Activated CD4-positive, alpha-beta T cell treated with anti-CD3 and anti-CD28 coated beads, Interleukin-2, amount 10 ng/mL, durations not matched to agents 24 days and 14 days (primary cell): ENCODE measurements at regions of chr2 and their contacts with region 1.

Region 1: GRCh38 chr2:113889471-113890252 is at the start of gene ACTR3:
- DNase-seq: peak; percentile 100
- H3K4me3 Mint-ChIP-seq: peak within 1 kb of the TSS; percentile 94
- H3K27ac Mint-ChIP-seq: peak within 1 kb of the TSS; percentile 99
- H3K4me1 Mint-ChIP-seq: peaks cover 66% of the 10 kb centered on the region
- H3K27me3 Mint-ChIP-seq: no peaks in the 10 kb centered on the region
- total RNA-seq, gene ACTR3: 452 and 460 TPM in 2 replicates

Region 2: DNA sequence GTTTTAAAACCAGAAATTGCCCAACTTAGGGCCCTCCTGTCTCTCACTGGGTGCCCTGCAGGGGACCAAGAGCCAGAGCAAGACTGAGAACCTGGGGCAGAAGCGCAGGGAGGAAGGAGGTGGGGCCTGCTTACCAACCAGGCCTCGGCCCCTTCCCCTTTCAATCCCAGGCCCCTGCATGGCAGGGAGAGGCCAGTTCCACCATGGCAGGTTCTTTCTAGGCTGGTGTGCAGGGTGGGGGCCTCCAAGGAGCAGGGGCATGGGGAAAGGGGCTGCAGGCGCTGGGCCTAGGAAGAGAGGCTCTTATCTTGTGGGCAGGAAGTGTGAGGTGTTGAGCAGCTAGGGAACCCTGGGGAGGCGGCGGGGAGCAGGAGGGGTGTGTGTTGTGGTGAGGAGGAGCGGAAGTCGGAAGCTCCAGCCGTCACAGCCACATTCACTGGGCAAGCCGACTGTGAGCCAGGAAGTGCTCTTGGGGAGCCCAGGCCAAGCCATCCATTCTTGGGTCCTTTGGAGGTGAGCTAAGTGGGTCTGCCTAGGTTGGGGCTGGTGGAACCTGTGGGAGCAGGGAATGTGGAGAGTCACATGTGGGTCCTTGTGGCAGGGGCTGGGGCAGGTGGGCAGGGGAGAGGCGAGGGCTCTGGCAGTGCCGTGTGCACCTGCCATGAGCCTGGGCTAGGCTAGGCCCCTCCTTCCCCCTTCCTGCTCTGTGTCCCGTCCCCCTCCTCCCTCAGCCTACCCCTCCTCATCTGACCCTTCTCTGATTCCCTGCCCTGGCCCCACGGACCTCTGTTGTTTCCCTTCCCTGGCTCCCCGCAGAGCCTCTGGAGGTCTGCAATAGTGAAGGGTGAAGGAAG is 715.9 kb before region 1 on chr2 and contains the start of gene PSD4:
- intact Hi-C with region 1: loop called (anchors 5 kb)
- DNase-seq: peak; percentile 96
- H3K4me3 Mint-ChIP-seq: peak within 1 kb of the TSS; percentile 88
- H3K27ac Mint-ChIP-seq: peak within 1 kb of the TSS; percentile 92
- H3K4me1 Mint-ChIP-seq: peaks cover 66% of the 10 kb centered on the region
- H3K27me3 Mint-ChIP-seq: no peaks in the 10 kb centered on the region
- total RNA-seq, gene PSD4: 268 and 278 TPM in 2 replicates

Region 3: DNA sequence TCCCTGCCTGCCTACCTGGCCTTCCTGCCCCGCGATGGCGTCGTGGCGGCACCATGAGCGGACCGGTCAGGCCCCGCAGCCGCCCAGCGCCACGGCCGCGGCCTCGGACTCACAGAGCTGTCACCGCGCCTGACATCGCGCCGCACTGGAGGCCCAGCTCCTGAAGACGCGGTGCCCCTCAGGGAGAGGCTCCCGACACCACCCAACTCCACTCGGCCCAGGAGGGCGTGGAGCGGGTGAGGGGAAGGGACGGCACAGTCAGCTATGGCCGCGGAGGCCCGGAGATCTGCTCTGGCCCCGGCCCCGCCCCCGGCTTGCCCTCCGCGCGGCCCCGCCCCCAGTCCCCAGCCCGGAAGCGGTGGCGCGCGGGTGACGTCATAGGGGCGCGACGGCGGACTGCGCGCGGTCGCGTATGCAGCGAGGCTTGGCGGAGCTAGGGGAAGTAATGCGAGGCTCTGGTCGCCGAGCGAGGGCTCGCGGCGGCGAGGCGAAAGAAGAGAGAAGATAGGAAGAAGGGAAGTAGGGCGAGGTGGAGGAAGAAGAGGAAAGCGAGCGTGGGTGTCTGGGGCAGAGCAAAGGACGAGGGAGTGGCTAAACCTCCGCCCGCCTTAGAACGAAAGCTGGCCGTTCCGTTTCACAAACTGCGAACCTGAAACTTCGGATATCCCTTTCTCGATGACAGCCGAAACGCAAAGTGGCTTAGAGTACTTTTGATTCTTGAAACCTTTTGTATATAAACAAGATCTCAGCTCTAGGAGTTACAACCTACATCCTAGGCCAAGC is 133.1 kb before region 1 on chr2 and contains the start of gene SLC35F5:
- intact Hi-C with region 1: loop called (anchors 1 kb)
- DNase-seq: peak; percentile 99
- H3K4me3 Mint-ChIP-seq: peak within 1 kb of the TSS; percentile 93
- H3K27ac Mint-ChIP-seq: peak within 1 kb of the TSS; percentile 100
- H3K4me1 Mint-ChIP-seq: peaks cover 21% of the 10 kb centered on the region
- H3K27me3 Mint-ChIP-seq: no peaks in the 10 kb centered on the region
- total RNA-seq, gene SLC35F5: 24.1 and 25.1 TPM in 2 replicates

Region 4: DNA sequence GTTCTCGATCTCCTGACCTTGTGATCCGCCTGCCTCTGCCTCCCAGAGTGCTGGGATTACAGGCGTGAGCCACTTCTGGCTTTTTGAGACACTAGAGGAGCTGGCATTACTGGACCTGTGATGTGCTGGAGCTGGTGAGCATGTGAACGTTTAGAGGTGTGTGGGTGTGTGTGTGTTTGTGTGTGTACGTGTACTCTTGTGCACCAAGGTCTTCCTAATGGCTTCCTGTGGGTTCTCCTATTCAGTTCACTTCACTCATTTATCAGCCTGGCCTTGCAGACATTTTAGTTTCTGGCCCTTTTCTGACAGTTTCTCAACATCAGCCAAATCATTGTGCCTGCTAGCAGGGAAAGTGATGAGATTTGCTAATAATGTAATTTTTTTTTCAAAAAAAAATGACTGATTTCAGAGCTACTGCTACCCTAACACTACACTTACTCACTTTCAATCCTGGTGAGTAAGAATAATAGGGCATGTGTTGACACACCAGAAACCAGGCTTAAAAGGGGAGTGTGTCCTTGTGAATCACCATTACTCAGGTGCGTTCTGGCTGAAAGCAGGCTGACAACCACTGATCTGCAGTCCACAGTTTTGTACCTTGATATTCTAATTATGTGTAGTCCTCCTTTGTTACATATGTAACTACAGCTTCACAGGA is 40.8 kb before region 1 on chr2:
- intact Hi-C with region 1: loop called (anchors 1 kb)
- DNase-seq: no peak
- H3K4me3 Mint-ChIP-seq: no peak overlapping the region
- H3K27ac Mint-ChIP-seq: peak overlapping the region; percentile 57
- H3K4me1 Mint-ChIP-seq: peaks cover 7% of the 10 kb centered on the region
- H3K27me3 Mint-ChIP-seq: no peaks in the 10 kb centered on the region

Region 5: DNA sequence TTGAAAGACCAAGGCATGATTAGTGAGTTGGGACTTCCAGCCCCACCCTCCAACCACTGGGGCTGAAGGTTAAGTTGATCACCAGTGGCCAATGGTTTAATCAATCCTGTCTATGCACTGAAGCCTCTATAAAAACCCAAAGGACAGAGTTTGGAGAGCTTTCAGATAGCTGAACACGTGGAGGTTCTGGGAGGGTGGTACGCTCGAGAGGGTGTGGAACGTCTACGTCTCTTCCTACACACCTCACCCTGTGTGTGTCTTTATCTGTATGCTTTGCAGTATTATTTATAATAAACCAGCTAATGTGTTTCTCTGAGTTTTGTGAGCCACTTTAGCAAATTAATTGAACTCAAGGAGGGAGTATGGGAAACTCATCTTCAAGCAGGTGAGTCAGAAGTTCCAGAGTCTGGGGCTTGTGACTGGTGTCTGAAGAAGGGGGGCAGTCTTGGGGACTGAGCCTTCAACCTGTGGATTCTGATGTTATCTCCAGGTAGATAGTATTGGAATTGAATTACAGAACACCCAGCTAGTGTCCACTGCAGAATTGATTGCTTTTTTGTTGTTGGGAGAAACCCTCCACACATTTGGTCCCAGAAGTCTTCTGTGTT is 20.6 kb after region 1 on chr2:
- intact Hi-C with region 1: loop called (anchors 2 kb)
- DNase-seq: peak; percentile 68
- H3K4me3 Mint-ChIP-seq: peak overlapping the region; percentile 6
- H3K27ac Mint-ChIP-seq: peak overlapping the region; percentile 88
- H3K4me1 Mint-ChIP-seq: peaks cover 51% of the 10 kb centered on the region
- H3K27me3 Mint-ChIP-seq: no peaks in the 10 kb centered on the region

Region 6: GRCh38 chr2:113977660-113978523 is 88.2 kb after region 1 on chr2:
- intact Hi-C with region 1: loop called (anchors 2 kb)
- DNase-seq: peak; percentile 52
- H3K4me3 Mint-ChIP-seq: no peak overlapping the region
- H3K27ac Mint-ChIP-seq: peak overlapping the region; percentile 35
- H3K4me1 Mint-ChIP-seq: peaks cover 11% of the 10 kb centered on the region
- H3K27me3 Mint-ChIP-seq: no peaks in the 10 kb centered on the region